ENCODE measurements at regions of chr14 and their contacts with region 1.

Region 1: GRCh38 chr14:35215110-35215876 is 76.9 kb upstream of the PSMA6 start:
- DNase-seq: peak; percentile 29
- H3K4me3 ChIP-seq: no peak overlapping the region
- CTCF ChIP-seq: peak; percentile 45

Region 2: DNA sequence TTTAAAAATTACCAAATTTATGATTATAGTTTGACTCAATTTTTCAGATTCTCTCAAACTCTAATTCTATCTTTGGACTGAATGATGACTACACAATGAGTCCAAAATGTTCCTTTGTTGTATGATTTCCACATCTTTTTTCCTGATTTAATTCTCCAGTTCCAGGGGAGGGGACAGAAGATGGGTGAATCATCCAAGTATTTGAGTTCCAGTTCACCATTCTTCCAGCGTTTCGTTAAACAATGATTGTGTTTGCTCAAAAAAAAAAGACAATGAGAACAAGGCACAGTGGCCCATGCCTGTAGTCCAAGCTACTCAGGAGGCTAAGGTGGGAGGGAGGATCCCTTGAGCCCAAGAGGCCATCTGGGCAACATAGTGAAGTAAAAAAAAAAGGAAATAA is 363.9 kb before region 1 on chr14:
- CTCF ChIA-PET with region 1: no interaction called
- POLR2A ChIA-PET with region 1: no interaction called
- DNase-seq: no peak
- H3K4me3 ChIP-seq: no peak overlapping the region
- CTCF ChIP-seq: no peak

Region 3: GRCh38 chr14:35174342-35174741 is 41.0 kb before region 1 on chr14:
- CTCF ChIA-PET with region 1: no interaction called
- POLR2A ChIA-PET with region 1: no interaction called
- DNase-seq: no peak
- H3K4me3 ChIP-seq: no peak overlapping the region
- CTCF ChIP-seq: no peak

Region 4: GRCh38 chr14:35197015-35197414 is 18.3 kb before region 1 on chr14:
- CTCF ChIA-PET with region 1: interaction called, 17 read pairs
- POLR2A ChIA-PET with region 1: no interaction called
- DNase-seq: no peak
- H3K4me3 ChIP-seq: no peak overlapping the region
- CTCF ChIP-seq: no peak

Region 5: DNA sequence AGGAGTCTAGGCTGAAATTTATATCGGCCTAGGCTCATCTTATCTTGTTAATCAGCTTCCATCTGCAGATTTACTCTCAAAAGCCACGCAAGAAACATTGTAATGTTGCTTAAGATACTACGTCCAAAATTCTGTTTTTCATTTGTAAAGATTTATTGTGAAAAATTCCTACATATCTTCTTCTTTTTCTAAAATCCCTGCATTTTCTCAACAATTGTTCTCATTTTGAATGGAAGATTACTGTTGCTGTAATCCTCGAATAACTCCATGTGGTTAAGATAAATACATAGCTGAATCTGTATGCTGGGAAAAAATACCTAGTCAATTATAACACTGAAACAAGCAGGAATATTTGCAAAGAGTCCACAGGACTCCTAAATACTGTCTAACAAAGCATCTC is 334.3 kb after region 1 on chr14:
- CTCF ChIA-PET with region 1: no interaction called
- POLR2A ChIA-PET with region 1: no interaction called
- DNase-seq: no peak
- H3K4me3 ChIP-seq: no peak overlapping the region
- CTCF ChIP-seq: no peak

Measured in AG04449 (cell line).